CD4-positive, alpha-beta memory T cell (primary cell): ENCODE measurements at regions of chr5 and their contacts with region 1.

Region 1: GRCh38 chr5:109409844-109410388 is at the start of gene PJA2:
- DNase-seq: peak; percentile 97 to 99 (median 98)
- H3K4me3 ChIP-seq: peak within 1 kb of the TSS; percentile 95 to 96
- H3K4me3 Mint-ChIP-seq: peak within 1 kb of the TSS; percentile 91 to 100 (median 99)
- H3K27ac ChIP-seq: peak within 1 kb of the TSS; percentile 97
- H3K27ac Mint-ChIP-seq: peak within 1 kb of the TSS; percentile 96 to 100 (median 99)
- H3K4me1 ChIP-seq: peaks cover 50% of the 10 kb centered on the region
- H3K4me1 Mint-ChIP-seq: peaks cover 26 to 65% (median 38%) of the 10 kb centered on the region in 4 donors
- H3K27me3 ChIP-seq: no peaks in the 10 kb centered on the region
- H3K27me3 Mint-ChIP-seq: peaks cover 0 to 3% of the 10 kb centered on the region in 2 donors
- total RNA-seq, gene PJA2: 90.0 to 90.6 TPM

Region 2: GRCh38 chr5:108381954-108382783 is 1027.7 kb before region 1 on chr5 and contains the start of gene FBXL17:
- CTCF ChIA-PET with region 1: no interaction called
- POLR2A ChIA-PET with region 1: interaction called, 61 read pairs
- intact Hi-C with region 1: loop called (anchors 1 kb)
- DNase-seq: peak; percentile 92 to 96 (median 94)
- H3K4me3 ChIP-seq: peak within 1 kb of the TSS; percentile 71 to 82
- H3K4me3 Mint-ChIP-seq: peak within 1 kb of the TSS; percentile 86 to 98 (median 90)
- H3K27ac ChIP-seq: peak within 1 kb of the TSS; percentile 91
- H3K27ac Mint-ChIP-seq: peak within 1 kb of the TSS; percentile 87 to 99 (median 98)
- H3K4me1 ChIP-seq: peaks cover 36% of the 10 kb centered on the region
- H3K4me1 Mint-ChIP-seq: peaks cover 25 to 47% (median 34%) of the 10 kb centered on the region in 4 donors
- H3K27me3 ChIP-seq: no peaks in the 10 kb centered on the region
- H3K27me3 Mint-ChIP-seq: no peaks in the 10 kb centered on the region
- total RNA-seq, gene FBXL17: 23.3 to 27.5 TPM

Region 3: DNA sequence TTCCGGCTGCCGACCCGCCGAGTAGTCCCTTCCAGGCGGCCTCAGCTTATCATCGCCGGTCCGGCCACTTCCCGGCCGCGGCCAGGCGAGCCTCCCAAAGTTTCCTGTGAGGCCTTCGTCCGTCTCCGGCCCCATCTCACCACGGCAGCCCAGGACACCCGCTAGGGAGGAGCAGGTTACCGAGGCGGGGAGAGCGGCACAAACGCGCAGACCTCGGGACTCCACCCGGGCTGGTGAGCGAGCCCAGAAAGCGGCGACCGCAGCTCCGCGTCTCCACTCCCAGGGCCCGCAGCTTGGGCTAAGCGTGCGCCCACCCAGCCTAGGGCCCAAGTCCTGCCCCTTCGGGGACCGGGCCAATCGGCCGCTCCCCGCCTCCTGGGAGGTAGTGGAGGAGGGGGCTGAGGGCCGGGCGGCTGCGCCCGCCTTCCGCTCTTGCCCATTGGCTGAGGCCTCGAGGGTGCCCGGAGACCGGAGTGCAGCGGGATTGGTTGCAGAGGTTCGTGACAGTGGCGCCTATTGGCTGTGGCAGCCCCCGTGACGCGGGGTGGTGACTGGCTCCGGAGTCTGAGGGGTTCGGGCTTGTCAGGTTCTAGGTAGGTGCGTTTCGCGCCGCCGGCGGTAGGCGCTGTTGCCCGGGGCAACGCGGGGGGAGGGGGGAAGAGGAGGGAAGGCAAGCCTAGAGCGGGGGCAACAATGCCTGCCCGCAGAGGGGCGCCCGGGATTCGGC is 661.4 kb before region 1 on chr5:
- CTCF ChIA-PET with region 1: no interaction called
- POLR2A ChIA-PET with region 1: interaction called, 3 read pairs
- intact Hi-C with region 1: loop called (anchors 1 kb)
- DNase-seq: peak; percentile 97 to 99 (median 98)
- H3K4me3 ChIP-seq: peak overlapping the region; percentile 82 to 87
- H3K4me3 Mint-ChIP-seq: peak overlapping the region; percentile 91 to 94 (median 92)
- H3K27ac ChIP-seq: peak overlapping the region; percentile 86
- H3K27ac Mint-ChIP-seq: peak overlapping the region; percentile 88 to 98 (median 97)
- H3K4me1 ChIP-seq: peaks cover 19% of the 10 kb centered on the region
- H3K4me1 Mint-ChIP-seq: peaks cover 7 to 20% (median 12%) of the 10 kb centered on the region in 4 donors
- H3K27me3 ChIP-seq: no peaks in the 10 kb centered on the region
- H3K27me3 Mint-ChIP-seq: peaks cover 0 to 5% of the 10 kb centered on the region in 2 donors

Region 4: GRCh38 chr5:109354761-109355160 is 55.2 kb before region 1 on chr5:
- CTCF ChIA-PET with region 1: no interaction called
- POLR2A ChIA-PET with region 1: interaction called, 6 read pairs
- intact Hi-C with region 1: loop called (anchors 5 kb)
- DNase-seq: no peak
- H3K4me3 ChIP-seq: no peak overlapping the region
- H3K4me3 Mint-ChIP-seq: no peak overlapping the region
- H3K27ac ChIP-seq: no peak overlapping the region
- H3K27ac Mint-ChIP-seq: no peak overlapping the region
- H3K4me1 ChIP-seq: no peaks in the 10 kb centered on the region
- H3K4me1 Mint-ChIP-seq: peaks cover 9 to 16% (median 12%) of the 10 kb centered on the region in 4 donors
- H3K27me3 ChIP-seq: no peaks in the 10 kb centered on the region
- H3K27me3 Mint-ChIP-seq: no peaks in the 10 kb centered on the region

Region 5: GRCh38 chr5:109388407-109388806 is 21.5 kb before region 1 on chr5:
- CTCF ChIA-PET with region 1: no interaction called
- POLR2A ChIA-PET with region 1: interaction called, 13 read pairs
- intact Hi-C with region 1: loop called (anchors 2 kb)
- DNase-seq: no peak
- H3K4me3 ChIP-seq: no peak overlapping the region
- H3K4me3 Mint-ChIP-seq: peak overlapping the region in 1 of 8 donors; percentile 22
- H3K27ac ChIP-seq: no peak overlapping the region
- H3K27ac Mint-ChIP-seq: peak overlapping the region in 4 of 7 donors; percentile 14 to 72 (median 36)
- H3K4me1 ChIP-seq: peaks cover 82% of the 10 kb centered on the region
- H3K4me1 Mint-ChIP-seq: peaks cover 50 to 90% (median 73%) of the 10 kb centered on the region in 4 donors
- H3K27me3 ChIP-seq: no peaks in the 10 kb centered on the region
- H3K27me3 Mint-ChIP-seq: no peaks in the 10 kb centered on the region

Region 6: GRCh38 chr5:109439590-109439989 is 29.7 kb after region 1 on chr5:
- CTCF ChIA-PET with region 1: interaction called, 4 read pairs
- POLR2A ChIA-PET with region 1: interaction called, 3 read pairs
- intact Hi-C with region 1: loop called (anchors 1 kb)
- DNase-seq: no peak
- H3K4me3 ChIP-seq: no peak overlapping the region
- H3K4me3 Mint-ChIP-seq: no peak overlapping the region
- H3K27ac ChIP-seq: no peak overlapping the region
- H3K27ac Mint-ChIP-seq: no peak overlapping the region
- H3K4me1 ChIP-seq: no peaks in the 10 kb centered on the region
- H3K4me1 Mint-ChIP-seq: no peaks in the 10 kb centered on the region
- H3K27me3 ChIP-seq: no peaks in the 10 kb centered on the region
- H3K27me3 Mint-ChIP-seq: no peaks in the 10 kb centered on the region

Region 7: DNA sequence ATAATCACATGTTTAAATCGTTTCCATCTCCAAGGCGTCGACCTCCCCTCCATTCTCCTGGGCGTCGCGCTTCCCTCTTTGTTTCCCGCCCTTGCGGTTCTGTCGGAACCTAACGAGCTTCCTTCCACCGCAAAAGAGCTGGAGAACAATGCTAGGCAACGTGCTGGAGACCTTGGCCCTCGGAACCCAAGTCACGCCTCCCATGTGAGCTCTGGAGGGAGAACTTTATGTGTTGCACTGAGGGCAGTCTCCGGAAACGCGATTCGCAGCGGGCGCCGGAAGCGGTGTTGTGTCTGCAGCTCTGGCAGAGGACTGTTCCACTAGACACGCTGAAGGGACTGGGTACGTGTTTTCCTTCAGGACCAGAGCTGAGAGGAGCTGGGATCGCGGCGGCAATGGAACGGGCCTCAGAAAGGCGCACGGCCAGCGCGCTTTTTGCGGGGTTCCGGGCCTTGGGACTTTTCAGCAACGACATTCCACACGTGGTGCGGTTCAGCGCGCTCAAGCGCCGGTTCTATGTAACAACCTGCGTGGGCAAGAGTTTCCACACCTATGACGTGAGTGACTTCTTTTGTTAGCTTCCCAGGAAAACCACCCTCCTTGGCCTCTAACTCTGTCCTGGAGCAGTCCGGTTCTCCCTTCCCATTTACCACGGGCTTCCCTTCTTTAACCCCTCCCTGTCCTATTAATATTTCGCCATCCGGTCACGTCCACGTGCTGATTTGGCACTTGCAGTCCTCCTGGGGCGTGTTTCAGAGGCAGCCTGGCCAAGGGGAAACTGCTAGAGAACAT is 1682.3 kb after region 1 on chr5 and contains the start of gene WDR36:
- CTCF ChIA-PET with region 1: no interaction called
- POLR2A ChIA-PET with region 1: no interaction called
- intact Hi-C with region 1: loop called (anchors 1 kb)
- DNase-seq: peak; percentile 85 to 91 (median 87)
- H3K4me3 ChIP-seq: peak within 1 kb of the TSS; percentile 82 to 90
- H3K4me3 Mint-ChIP-seq: peak within 1 kb of the TSS; percentile 90 to 98 (median 97)
- H3K27ac ChIP-seq: peak within 1 kb of the TSS; percentile 73
- H3K27ac Mint-ChIP-seq: peak within 1 kb of the TSS; percentile 83 to 98 (median 96)
- H3K4me1 ChIP-seq: peaks cover 25% of the 10 kb centered on the region
- H3K4me1 Mint-ChIP-seq: peaks cover 15 to 34% (median 27%) of the 10 kb centered on the region in 4 donors
- H3K27me3 ChIP-seq: no peaks in the 10 kb centered on the region
- H3K27me3 Mint-ChIP-seq: peaks cover 1 to 7% of the 10 kb centered on the region in 2 donors
- total RNA-seq, gene WDR36: 26.3 to 27.6 TPM